PC-3 (cell line): ENCODE measurements at regions of chr6 and their contacts with region 1.

Region 1: GRCh38 chr6:53811082-53811481 is 16.3 kb downstream of the LRRC1 start:
- DNase-seq: peak; percentile 95
- ATAC-seq: peak; percentile 87
- H3K4me3 ChIP-seq: peak overlapping the region; percentile 33
- H3K27ac ChIP-seq: peak overlapping the region; percentile 36
- H3K4me1 ChIP-seq: peaks cover 40% of the 10 kb centered on the region
- H3K27me3 ChIP-seq: no peaks in the 10 kb centered on the region
- CTCF ChIP-seq: no peak

Region 2: DNA sequence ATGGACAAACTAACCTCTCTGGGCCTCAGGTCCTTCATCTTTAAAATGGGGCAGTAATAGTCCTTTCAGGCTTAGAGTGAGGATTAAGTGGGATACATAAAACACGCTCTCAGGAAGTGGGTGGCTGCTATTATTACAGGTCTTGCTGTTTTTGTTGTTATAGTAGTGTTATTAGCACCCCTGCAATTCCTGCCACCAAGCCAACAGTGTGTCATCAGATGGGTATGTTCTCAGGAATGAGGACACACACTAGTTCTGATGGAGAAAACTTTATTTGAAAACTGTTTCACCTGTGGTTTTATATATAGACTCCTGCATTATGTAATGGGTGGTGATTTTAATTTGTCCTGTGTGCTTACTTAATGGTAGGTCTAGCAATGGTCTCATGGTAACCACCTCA is 115.4 kb after region 1 on chr6:
- CTCF ChIA-PET with region 1: no interaction called
- POLR2A ChIA-PET with region 1: no interaction called
- intact Hi-C with region 1: loop called (anchors 5 kb)
- DNase-seq: peak; percentile 73
- ATAC-seq: peak; percentile 56
- H3K4me3 ChIP-seq: peak overlapping the region; percentile 49
- H3K27ac ChIP-seq: peak overlapping the region; percentile 59
- H3K4me1 ChIP-seq: peaks cover 38% of the 10 kb centered on the region
- H3K27me3 ChIP-seq: no peaks in the 10 kb centered on the region
- CTCF ChIP-seq: no peak